Right ventricle myocardium inferior (tissue), 1 donor: ENCODE measurements at regions of chr6 and their contacts with region 1.

Region 1: GRCh38 chr6:145814501-145815308 is at the start of gene FBXO30:
- DNase-seq: peak; percentile 93
- ATAC-seq: peak; percentile 98
- total RNA-seq, gene FBXO30: 13.1 TPM

Region 2: GRCh38 chr6:145734486-145735355 is 80.0 kb before region 1 on chr6:
- intact Hi-C with region 1: loop called (anchors 1 kb)
- DNase-seq: peak; percentile 95
- ATAC-seq: peak; percentile 93

Region 3: GRCh38 chr6:145887969-145888368 is 73.3 kb after region 1 on chr6:
- intact Hi-C with region 1: loop called (anchors 5 kb)
- DNase-seq: no peak
- ATAC-seq: no peak

Region 4: DNA sequence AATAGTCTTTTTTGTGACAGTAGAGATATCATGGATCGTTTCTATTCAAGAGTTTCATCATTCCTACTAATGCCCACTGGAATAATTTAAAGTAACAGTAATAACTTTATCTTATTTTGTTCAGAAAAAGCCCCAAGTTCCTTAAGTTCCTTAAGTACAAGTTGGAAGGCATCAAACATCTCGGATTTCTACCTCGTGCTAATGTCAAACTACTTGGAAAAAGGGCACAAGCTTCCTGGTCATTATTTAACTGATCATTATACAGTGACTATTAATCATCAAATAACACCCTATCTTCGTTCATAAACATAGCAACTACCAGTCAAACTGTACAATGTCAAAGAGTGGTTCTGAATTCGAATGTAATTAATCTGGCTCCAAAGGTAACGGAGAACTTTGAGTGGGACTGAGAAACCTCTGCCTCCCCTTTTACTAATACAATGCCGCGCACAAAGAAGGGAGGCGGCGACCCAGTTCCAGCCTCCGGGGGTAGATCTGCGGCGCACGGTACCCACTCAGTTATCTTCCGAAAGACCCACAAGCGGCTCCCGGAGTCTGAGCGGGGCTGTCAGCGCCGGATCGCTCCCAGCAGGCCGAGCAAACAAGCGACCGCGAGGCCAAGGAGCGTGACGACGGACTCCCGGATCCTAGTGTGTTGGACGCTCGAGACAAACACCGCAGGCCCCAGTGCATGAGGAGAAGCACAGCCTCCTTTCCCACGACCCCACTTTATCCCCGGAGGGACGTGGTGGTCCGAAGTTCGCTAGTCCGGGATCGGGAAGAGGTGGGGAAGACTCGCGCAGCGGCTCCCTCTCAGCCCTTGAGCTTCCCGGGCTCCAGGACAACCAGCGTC is 148.7 kb after region 1 on chr6:
- intact Hi-C with region 1: loop called (anchors 5 kb)
- DNase-seq: peak; percentile 78
- ATAC-seq: peak; percentile 33